Activated CD4-positive, alpha-beta T cell treated with anti-CD3 and anti-CD28 coated beads, Interleukin-2, amount 10 ng/mL, durations not matched to agents 24 days and 14 days (primary cell): ENCODE measurements at regions of chr12 and their contacts with region 1.

Region 1: DNA sequence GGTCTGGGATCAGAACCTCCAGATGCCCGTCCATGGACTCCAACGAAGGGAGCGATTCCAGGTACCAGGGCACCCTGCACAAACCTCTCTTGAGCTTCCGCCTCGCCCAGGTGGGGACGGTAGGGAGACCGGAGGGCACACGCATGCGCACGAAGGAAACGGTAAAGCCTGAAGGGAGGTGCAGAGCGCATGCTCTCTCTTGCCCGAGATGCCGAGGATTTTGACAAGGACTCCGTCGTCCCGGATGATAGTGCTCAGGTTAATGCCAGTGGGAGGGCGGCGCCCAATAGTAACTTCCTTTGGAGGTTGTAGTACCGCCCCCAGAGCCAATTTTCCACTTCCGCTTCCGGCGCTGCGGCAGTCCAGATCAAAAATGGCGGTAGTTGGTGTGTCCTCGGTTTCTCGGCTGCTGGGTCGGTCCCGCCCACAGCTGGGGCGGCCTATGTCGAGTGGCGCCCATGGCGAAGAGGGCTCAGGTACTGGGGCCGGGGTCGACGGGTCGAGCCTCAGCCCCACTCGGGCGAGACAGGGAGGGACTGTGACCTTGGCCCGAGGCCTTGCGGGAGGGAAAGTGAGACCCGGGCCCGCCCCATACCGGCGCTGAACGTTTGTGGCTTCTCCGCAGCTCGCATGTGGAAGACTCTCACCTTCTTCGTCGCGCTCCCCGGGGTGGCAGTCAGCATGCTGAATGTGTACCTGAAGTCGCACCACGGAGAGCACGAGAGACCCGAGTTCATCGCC is at the start of gene COX6A1:
- DNase-seq: peak; percentile 99
- H3K4me3 Mint-ChIP-seq: peak within 1 kb of the TSS; percentile 89
- H3K27ac Mint-ChIP-seq: peak within 1 kb of the TSS; percentile 94
- H3K4me1 Mint-ChIP-seq: peaks cover 23% of the 10 kb centered on the region
- H3K27me3 Mint-ChIP-seq: peaks cover 4% of the 10 kb centered on the region
- total RNA-seq, gene COX6A1: 362 and 363 TPM in 2 replicates

Region 2: DNA sequence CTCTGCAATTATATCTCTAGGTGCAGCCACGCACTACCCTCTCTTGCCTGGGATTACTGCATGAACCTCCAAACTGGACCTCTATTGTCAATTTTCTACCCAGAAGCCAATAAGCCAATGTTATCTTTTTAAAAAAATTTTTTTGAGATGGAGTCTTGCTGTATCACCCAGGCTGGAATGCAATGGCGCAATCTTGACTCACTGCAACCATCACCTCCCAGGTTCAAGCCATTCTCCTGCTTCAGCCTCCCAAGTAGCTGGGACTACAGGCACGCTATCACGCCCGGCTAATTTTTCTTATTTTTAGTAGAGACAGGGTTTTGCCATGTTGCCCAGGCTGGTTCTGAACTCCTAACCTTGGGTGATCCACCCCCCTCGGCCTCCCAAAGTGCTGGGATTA is 161.2 kb before region 1 on chr12:
- intact Hi-C with region 1: no loop called
- DNase-seq: no peak
- H3K4me3 Mint-ChIP-seq: no peak overlapping the region
- H3K27ac Mint-ChIP-seq: no peak overlapping the region
- H3K4me1 Mint-ChIP-seq: no peaks in the 10 kb centered on the region
- H3K27me3 Mint-ChIP-seq: no peaks in the 10 kb centered on the region

Region 3: DNA sequence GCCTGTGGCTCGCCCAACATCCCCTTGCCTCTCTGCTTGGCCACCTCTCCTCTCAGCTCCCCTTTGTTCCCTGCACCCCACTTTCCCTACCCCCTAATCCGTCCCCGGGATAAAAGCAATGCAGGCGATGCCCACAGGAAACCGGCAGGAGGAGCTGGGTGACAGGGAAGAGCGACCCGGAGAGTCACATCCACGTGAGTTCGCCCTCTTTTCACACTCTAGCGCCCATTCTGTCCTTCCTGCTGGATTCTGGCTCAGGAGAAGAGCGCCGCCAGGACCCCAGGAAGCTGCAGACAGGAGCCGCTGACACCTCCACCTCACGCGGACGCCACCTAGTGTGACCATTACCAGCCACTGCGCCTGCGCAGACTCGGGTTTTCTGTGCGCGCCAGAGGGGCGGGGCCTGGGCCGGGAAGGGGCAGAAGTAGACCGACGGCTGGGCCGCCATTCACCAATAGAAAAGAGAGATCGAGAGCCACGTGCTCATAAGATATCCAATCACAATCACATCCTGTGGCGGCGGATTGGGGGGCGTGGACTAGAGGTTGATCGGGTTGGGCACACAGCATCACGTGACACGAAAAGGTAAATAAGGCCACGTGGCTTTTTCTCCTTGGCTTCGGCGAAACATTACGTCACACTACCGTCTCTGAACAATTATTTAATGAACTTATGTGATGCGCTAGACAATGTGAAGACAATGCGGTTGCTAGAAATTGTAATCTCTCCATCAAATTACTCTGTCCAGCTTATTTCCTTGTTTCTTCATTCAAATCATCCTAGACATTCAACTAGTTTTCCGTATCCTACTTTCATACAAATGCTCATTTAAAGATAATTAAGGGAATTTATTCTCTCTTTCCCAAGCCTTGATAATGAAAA is 120.5 kb before region 1 on chr12:
- intact Hi-C with region 1: loop called (anchors 1 kb)
- DNase-seq: peak; percentile 100
- H3K4me3 Mint-ChIP-seq: peak overlapping the region; percentile 93
- H3K27ac Mint-ChIP-seq: peak overlapping the region; percentile 95
- H3K4me1 Mint-ChIP-seq: peaks cover 12% of the 10 kb centered on the region
- H3K27me3 Mint-ChIP-seq: peaks cover 5% of the 10 kb centered on the region

Region 4: GRCh38 chr12:120368789-120369602 is 68.9 kb before region 1 on chr12 and contains the start of gene MSI1:
- intact Hi-C with region 1: no loop called
- DNase-seq: peak; percentile 63
- H3K4me3 Mint-ChIP-seq: peak within 1 kb of the TSS; percentile 73
- H3K27ac Mint-ChIP-seq: no peak within 1 kb of the TSS
- H3K4me1 Mint-ChIP-seq: peaks cover 12% of the 10 kb centered on the region
- H3K27me3 Mint-ChIP-seq: peaks cover 72% of the 10 kb centered on the region
- total RNA-seq, gene MSI1: 0.33 and 0.79 TPM in 2 replicates

Region 5: DNA sequence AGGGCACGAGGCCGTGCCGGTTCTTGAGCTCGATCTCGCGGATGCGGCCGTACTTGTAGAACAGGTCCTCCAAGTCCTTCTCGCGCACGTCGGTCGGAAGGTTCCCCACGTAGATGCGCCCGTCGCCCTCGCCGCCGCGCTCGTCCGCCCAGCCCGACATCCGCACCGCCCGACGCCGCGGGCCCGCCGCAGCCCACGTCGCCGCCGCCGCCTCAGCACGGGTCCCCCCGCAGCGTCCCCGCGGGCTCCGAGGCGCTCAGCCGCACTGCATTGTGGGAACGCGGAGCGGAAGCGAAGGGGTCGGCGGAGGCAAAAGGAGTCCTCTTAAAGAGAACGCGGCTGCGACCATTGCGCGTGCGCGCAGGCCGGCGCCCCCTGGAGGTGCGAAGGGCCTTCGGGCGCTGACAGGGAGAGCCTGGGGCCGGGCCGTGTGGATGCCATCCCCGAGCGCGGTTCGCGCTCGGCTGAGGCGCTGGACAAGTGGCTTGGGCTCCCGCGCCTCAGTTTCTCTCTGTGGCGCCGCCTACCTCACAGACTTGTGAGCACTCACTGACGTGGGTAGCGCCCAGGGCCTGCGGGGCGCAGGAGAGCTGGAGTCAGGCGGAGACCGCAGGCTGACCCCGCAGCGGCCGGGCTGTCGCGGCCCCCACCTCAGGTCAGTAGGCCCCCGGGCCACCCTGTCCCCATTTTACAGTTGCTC is 31.7 kb after region 1 on chr12 and contains the start of gene SRSF9:
- intact Hi-C with region 1: loop called (anchors 1 kb)
- DNase-seq: peak; percentile 100
- H3K4me3 Mint-ChIP-seq: peak within 1 kb of the TSS; percentile 90
- H3K27ac Mint-ChIP-seq: peak within 1 kb of the TSS; percentile 88
- H3K4me1 Mint-ChIP-seq: peaks cover 34% of the 10 kb centered on the region
- H3K27me3 Mint-ChIP-seq: peaks cover under 1% of the 10 kb centered on the region
- total RNA-seq, gene SRSF9: 249 and 255 TPM in 2 replicates

Region 6: DNA sequence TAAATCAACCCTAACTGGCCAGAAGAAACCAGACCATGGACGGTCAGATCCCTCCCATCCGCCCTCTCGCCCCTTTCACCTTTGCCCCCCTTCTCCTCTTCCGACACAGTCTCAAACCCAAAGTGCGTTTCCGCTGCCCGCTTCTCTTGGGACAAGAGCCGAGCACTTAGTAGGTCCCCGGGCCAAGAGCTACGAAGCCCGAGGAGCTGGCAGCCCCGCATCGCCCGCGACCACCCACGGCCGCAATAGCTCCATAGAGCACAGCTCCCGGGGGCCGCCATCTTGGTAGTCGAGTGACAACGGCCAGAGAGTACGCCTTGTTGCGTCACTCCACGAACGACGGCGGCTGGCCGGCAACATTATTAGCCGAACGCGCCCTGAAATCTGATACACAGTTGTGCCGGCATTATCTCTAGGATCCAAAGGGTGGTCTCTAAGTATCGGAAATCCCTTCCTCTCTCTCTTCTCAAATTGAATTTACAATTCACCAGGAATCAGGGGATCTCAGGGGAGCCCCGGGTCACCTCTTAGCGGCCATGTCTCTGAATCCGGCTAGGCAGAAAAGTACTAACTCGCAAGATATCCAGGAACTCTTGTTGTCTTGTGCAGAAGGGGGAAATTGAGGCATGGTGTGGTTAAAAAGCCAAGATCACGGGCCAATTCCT is 91.1 kb after region 1 on chr12 and contains the start of gene COQ5:
- intact Hi-C with region 1: loop called (anchors 2 kb)
- DNase-seq: peak; percentile 95
- H3K4me3 Mint-ChIP-seq: peak within 1 kb of the TSS; percentile 99
- H3K27ac Mint-ChIP-seq: peak within 1 kb of the TSS; percentile 99
- H3K4me1 Mint-ChIP-seq: peaks cover 12% of the 10 kb centered on the region
- H3K27me3 Mint-ChIP-seq: no peaks in the 10 kb centered on the region
- total RNA-seq, gene COQ5: 28.0 and 28.3 TPM in 2 replicates

Region 7: DNA sequence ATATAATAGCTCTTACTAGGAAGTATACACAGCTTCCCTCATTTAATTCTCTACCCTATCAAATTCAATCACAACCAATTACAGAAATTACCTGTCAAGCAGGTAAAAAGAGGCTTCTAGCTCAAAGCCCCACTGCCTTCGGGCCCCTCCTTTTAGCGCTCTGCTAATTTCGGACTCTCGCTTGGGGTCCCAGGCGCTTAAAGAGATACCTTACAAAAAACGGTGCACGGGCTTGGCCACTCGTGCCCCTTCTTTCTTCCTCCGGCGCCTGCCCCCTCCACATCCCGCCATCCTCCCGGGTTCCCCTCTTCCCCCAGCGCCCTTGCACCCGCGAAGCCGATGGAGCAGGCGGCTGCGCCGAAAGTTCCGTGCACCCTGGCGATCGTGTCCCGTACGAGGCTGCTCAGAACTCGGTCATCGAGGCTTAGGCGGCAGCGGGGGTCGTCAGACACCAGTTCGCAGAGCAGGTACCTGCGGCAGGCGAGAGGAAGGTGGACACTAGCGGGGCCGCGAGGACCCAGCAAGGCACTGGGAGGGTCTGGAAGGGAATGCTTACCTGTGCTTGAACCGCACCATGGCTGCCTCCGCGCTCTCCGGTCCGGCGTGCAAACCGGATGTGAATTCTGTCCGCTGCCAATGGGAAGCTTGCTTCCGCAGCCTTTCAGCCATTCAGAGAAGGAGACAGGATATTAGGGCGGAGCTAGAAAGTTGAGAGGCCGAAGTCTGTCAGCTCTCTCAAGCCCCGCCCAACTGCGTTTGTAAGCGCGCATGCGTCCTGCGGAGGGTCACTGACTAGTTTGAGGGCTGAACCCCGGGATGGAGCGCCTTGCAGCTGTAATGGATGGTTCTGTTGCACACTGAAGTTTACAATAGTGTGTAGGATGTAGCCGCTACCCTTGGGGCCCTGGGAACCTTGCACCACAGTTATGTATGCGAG is 143.1 kb after region 1 on chr12 and contains the start of gene POP5:
- intact Hi-C with region 1: no loop called
- DNase-seq: peak; percentile 99
- H3K4me3 Mint-ChIP-seq: peak within 1 kb of the TSS; percentile 96
- H3K27ac Mint-ChIP-seq: peak within 1 kb of the TSS; percentile 85
- H3K4me1 Mint-ChIP-seq: peaks cover 31% of the 10 kb centered on the region
- H3K27me3 Mint-ChIP-seq: peaks cover 19% of the 10 kb centered on the region
- total RNA-seq, gene POP5: 74.0 and 76.0 TPM in 2 replicates